H1 (cell line): ENCODE measurements at regions of chr18 and their contacts with region 1.

Region 1: GRCh38 chr18:36186911-36187834 is at the start of gene MOCOS:
- DNase-seq: peak in 1 of 2 experiments; percentile 94
- H3K4me3 ChIP-seq: peak within 1 kb of the TSS; percentile 54 to 79 (median 74)
- H3K27ac ChIP-seq: no peak within 1 kb of the TSS
- H3K4me1 ChIP-seq: peaks cover 3 to 13% (median 8%) of the 10 kb centered on the region in 4 experiments
- H3K27me3 ChIP-seq: peaks cover 0 to 39% (median 27%) of the 10 kb centered on the region in 4 experiments; a peak in 6 of 7 replicates
- CTCF ChIP-seq: no peak
- EP300 ChIP-seq: no peak
- POLR2A ChIP-seq: peak in 1 of 2 experiments; percentile 71; a peak in 2 of 3 replicates
- RAD21 ChIP-seq: no peak
- total RNA-seq, gene MOCOS: 5.8 and 6.5 TPM in 2 replicates

Region 2: DNA sequence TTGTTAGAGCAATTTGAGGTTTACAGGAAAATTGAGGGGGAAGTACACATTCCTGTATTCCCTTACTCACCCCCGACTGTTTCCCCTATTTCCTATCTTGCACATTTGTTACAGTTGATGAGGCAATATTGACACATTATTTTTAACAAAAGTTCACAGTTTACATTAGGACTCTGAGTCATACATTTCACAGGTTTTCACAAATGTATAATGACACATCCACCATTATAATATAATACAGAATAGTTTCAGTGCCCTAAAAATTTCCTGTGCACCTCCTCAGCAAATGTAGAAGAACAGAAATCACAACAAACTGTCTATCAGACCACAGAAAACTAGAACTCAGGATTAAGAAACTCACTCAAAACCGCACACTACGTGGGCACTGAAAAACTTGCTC is 375.3 kb before region 1 on chr18:
- CTCF ChIA-PET with region 1: no interaction called
- POLR2A ChIA-PET with region 1: no interaction called
- DNase-seq: no peak
- H3K4me3 ChIP-seq: no peak overlapping the region
- H3K27ac ChIP-seq: no peak overlapping the region
- H3K4me1 ChIP-seq: peaks cover 0 to 8% (median 2%) of the 10 kb centered on the region in 4 experiments; a peak in 1 of 7 replicates
- H3K27me3 ChIP-seq: no peaks in the 10 kb centered on the region
- CTCF ChIP-seq: no peak
- EP300 ChIP-seq: no peak
- POLR2A ChIP-seq: no peak
- RAD21 ChIP-seq: no peak

Region 3: DNA sequence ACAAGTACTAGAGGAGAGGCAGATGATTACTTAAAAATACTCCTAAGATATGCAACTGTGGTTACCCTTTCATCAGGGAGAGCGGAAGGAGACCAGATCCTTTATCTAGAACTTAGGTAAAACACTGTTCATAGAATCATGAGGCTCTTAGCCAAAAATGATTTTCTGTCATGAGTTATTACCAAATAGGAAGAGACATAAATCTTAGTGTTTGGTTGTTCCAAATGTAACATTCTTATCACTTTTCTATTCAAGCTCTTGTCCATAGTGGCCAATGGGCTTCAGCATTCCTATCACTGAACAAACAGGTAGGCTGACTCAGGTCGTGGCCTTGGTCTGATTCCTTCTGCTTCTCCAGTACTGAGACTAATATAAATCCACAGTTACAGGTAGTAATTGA is 158.3 kb before region 1 on chr18:
- CTCF ChIA-PET with region 1: no interaction called
- POLR2A ChIA-PET with region 1: no interaction called
- DNase-seq: no peak
- H3K4me3 ChIP-seq: no peak overlapping the region
- H3K27ac ChIP-seq: no peak overlapping the region
- H3K4me1 ChIP-seq: no peaks in the 10 kb centered on the region
- H3K27me3 ChIP-seq: no peaks in the 10 kb centered on the region
- CTCF ChIP-seq: no peak
- EP300 ChIP-seq: no peak
- POLR2A ChIP-seq: no peak
- RAD21 ChIP-seq: no peak

Region 4: GRCh38 chr18:36075903-36076579 is 111.1 kb before region 1 on chr18:
- CTCF ChIA-PET with region 1: no interaction called
- POLR2A ChIA-PET with region 1: no interaction called
- DNase-seq: no peak
- H3K4me3 ChIP-seq: no peak overlapping the region
- H3K27ac ChIP-seq: no peak overlapping the region
- H3K4me1 ChIP-seq: no peaks in the 10 kb centered on the region
- H3K27me3 ChIP-seq: no peaks in the 10 kb centered on the region
- CTCF ChIP-seq: no peak
- EP300 ChIP-seq: no peak
- POLR2A ChIP-seq: no peak
- RAD21 ChIP-seq: no peak

Region 5: DNA sequence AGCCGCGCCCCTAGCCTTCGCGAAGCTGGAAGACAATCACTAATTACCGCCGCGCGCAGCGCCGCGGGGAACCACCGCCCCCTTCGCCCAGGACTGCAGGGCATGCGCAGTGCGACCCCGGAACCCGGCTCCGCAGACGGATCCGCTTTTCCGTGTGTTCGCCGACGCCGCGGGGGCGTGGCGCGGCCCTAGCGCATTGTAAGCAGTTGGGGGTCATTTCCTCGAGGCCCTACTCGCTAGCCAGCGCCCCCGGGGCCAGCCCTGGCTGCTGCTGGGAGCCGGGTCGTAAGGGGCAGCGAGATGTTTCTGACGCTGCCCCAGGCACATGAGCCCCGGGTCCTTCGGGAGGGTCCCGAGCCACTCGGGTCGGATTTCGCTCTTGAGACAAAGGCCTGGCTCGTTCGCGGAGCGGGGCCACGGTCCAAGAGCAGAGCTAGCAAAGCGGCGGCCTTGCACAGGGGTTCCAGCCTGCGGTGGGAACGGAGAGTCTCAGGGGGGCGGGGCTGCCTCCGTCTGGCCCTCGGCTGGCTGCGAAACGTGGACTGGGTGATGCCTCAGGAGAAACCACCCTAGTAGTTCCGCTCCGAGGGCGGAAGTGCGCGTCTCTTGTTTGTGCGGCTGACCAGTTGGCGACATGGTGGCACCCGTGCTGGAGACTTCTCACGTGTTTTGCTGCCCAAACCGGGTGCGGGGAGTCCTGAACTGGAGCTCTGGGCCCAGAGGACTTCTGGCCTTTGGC is 57.7 kb before region 1 on chr18 and contains the starts of genes ELP2 and SLC39A6:
- CTCF ChIA-PET with region 1: no interaction called
- POLR2A ChIA-PET with region 1: interaction called, 16 read pairs
- DNase-seq: peak; percentile 89 to 98
- H3K4me3 ChIP-seq: peak within 1 kb of the TSS; percentile 94 to 99 (median 95)
- H3K27ac ChIP-seq: peak within 1 kb of the TSS; percentile 95
- H3K4me1 ChIP-seq: peaks cover 0 to 6% (median 3%) of the 10 kb centered on the region in 4 experiments; a peak in 3 of 7 replicates
- H3K27me3 ChIP-seq: 0 out of 7 replicates have a peak, but pooled peaks cover 0 to 2% (median 0%) of the 10 kb centered on the region in 4 experiments
- CTCF ChIP-seq: peak in 1 of 3 experiments; percentile 0; a peak in 1 of 4 replicates
- EP300 ChIP-seq: no peak; a peak in 1 of 3 replicates
- POLR2A ChIP-seq: peak in 1 of 2 experiments; percentile 81; a peak in 2 of 3 replicates
- RAD21 ChIP-seq: no peak
- total RNA-seq, gene ELP2: 156 and 165 TPM in 2 replicates
- total RNA-seq, gene SLC39A6: 36.8 and 37.2 TPM in 2 replicates

Region 6: GRCh38 chr18:36212301-36213171 is 25.4 kb after region 1 on chr18:
- CTCF ChIA-PET with region 1: interaction called, 3 read pairs
- POLR2A ChIA-PET with region 1: interaction called, 14 read pairs
- DNase-seq: no peak
- H3K4me3 ChIP-seq: no peak overlapping the region
- H3K27ac ChIP-seq: no peak overlapping the region
- H3K4me1 ChIP-seq: no peaks in the 10 kb centered on the region
- H3K27me3 ChIP-seq: no peaks in the 10 kb centered on the region
- CTCF ChIP-seq: peak in 1 of 3 experiments; percentile 8; a peak in 1 of 4 replicates
- EP300 ChIP-seq: no peak
- POLR2A ChIP-seq: no peak
- RAD21 ChIP-seq: peak; percentile 23 to 48; a peak in 3 of 4 replicates